IMR-90 (cell line): ENCODE measurements at regions of chr1 and their contacts with region 1.

Region 1: GRCh38 chr1:222736972-222737371 is at the start of gene FAM177B:
- DNase-seq: peak; percentile 21
- ATAC-seq: peak; percentile 27; the same call in 1 of the 2 replicates
- H3K4me3 ChIP-seq: no peak within 1 kb of the TSS
- H3K27ac ChIP-seq: no peak within 1 kb of the TSS
- H3K4me1 ChIP-seq: peaks cover 6% of the 10 kb centered on the region
- H3K27me3 ChIP-seq: no peaks in the 10 kb centered on the region
- CTCF ChIP-seq: no peak
- POLR2A ChIP-seq: no peak
- RAD21 ChIP-seq: no peak
- total RNA-seq, gene FAM177B: not detected in 2 replicates

Region 2: GRCh38 chr1:222772996-222773379 is 36.0 kb after region 1 on chr1:
- CTCF ChIA-PET with region 1: no interaction called
- POLR2A ChIA-PET with region 1: no interaction called
- dilution Hi-C with region 1: no loop called
- in situ Hi-C with region 1: no loop called
- intact Hi-C with region 1: no loop called
- DNase-seq: no peak
- ATAC-seq: no peak
- H3K4me3 ChIP-seq: no peak overlapping the region
- H3K27ac ChIP-seq: no peak overlapping the region
- H3K4me1 ChIP-seq: no peaks in the 10 kb centered on the region
- H3K27me3 ChIP-seq: no peaks in the 10 kb centered on the region
- CTCF ChIP-seq: no peak
- POLR2A ChIP-seq: no peak
- RAD21 ChIP-seq: no peak

Region 3: DNA sequence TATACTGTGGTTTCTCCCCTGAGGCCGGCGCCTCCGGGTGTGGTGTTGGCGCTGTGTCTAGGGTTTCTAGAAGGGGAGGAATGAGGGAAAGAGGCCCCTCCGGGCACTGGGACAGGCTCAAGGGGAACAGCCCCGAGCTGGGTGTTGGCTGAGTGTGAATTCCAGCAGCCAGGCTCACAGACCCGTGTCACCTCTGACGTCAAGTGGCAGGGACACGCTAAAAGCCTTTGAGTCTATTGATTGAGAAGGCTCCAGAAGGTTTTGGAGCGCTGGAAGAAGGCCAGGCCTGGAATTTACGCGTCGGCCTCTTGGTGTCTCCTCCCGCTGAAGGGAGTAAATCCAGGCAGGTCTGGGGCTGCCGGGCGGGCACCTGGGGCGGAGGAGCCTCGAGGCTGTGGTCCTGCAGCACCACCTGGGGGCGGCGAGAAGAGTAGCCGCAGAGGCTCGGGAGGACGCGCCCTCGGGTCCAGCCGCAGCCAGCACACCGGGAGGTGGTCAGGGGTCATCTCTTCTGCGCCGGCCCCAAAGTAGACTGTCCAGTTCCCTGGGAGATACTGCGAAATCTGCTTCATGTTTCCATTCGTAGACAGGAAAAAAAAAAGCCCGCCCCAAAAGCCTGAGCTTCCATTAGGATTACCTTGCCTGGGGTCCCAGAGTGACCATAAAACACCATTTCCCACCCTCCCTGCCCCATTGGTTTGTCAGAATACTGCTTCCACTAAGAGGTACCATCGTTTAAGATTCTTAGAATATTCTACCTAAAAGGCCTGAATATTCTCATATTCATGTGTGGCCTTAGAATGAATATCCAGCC is 344.4 kb after region 1 on chr1:
- CTCF ChIA-PET with region 1: interaction called, 3 read pairs
- POLR2A ChIA-PET with region 1: no interaction called
- dilution Hi-C with region 1: no loop called
- in situ Hi-C with region 1: no loop called
- intact Hi-C with region 1: loop called (anchors 1 kb)
- DNase-seq: peak; percentile 73
- ATAC-seq: peak; percentile 98
- H3K4me3 ChIP-seq: peak overlapping the region; percentile 26
- H3K27ac ChIP-seq: no peak overlapping the region
- H3K4me1 ChIP-seq: no peaks in the 10 kb centered on the region
- H3K27me3 ChIP-seq: peaks cover 52% of the 10 kb centered on the region
- CTCF ChIP-seq: peak; percentile 91
- POLR2A ChIP-seq: no peak
- RAD21 ChIP-seq: peak; percentile 98

Region 4: DNA sequence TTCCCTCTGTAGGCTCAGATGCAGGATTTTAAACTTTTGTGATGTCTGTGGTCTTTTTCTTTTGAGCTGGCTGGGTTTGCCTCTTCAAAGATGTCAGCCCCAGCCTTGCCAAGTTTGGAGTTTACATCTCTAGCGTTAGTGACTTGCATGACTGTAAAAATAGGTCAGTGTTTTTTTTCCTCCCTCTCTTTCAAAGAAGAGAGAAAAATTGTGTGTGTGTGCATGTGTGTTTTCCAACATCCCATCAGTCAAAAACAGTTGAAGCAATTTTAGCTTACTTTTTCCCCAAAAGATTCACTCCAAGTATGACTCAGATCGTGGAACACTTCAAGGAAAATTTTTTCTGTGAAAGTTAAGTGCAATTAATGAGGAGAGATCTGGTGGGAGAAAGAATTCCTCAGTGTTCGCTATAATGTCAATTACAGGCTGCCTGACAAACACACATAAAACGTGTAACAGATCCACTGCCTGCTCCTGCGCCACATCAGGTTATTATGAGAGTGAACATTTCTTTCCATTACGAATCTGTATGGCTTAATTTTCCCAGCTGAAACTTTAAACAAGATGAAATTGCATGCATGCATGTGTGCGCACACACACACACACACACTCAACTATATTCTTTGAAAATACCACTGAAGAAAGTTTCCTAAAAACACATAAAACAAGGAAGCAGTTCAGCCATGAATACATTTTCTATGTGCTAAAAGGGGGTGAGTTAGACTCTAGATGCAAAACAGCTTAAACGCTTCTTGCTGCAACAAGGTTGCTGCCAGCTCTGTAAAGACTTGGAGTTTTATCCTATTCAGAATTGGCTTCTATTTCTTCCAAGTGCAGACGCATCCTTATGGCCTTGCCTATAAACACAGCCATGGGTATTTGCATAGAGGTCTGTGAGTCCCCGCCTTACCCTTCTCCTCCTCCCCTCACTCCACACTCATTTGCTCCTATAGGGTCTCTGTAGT is 350.6 kb after region 1 on chr1:
- CTCF ChIA-PET with region 1: interaction called, 7 read pairs
- POLR2A ChIA-PET with region 1: no interaction called
- dilution Hi-C with region 1: no loop called
- in situ Hi-C with region 1: no loop called
- intact Hi-C with region 1: loop called (anchors 1 kb)
- DNase-seq: peak; percentile 20
- ATAC-seq: no peak
- H3K4me3 ChIP-seq: no peak overlapping the region
- H3K27ac ChIP-seq: no peak overlapping the region
- H3K4me1 ChIP-seq: no peaks in the 10 kb centered on the region
- H3K27me3 ChIP-seq: peaks cover 52% of the 10 kb centered on the region
- CTCF ChIP-seq: no peak
- POLR2A ChIP-seq: no peak
- RAD21 ChIP-seq: no peak